IMR-90 (cell line): ENCODE measurements at regions of chr17 and their contacts with region 1.

Region 1: DNA sequence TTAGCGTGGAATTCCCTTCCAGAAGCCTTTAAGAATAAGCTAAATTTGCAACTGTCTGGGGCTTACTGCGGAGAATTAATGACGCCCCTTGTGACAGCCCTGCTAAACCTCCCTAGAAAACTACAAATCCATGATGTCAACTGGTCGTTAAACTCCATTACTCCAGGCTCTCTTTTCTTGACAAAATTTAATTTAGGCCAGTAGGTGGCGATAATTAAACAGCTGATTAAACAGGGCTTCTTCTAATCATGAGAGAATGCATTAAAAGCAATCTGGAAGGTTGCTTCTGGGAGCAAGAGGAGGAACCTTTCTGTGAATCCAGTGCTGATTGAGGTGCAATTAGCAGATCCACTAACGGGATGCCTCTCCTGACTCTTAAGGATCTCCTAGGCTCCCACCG is 8.1 kb upstream of the NLRP1 start:
- DNase-seq: peak; percentile 44
- ATAC-seq: peak; percentile 55; the same call in 1 of the 2 replicates
- H3K4me3 ChIP-seq: no peak overlapping the region
- H3K27ac ChIP-seq: no peak overlapping the region
- H3K4me1 ChIP-seq: no peaks in the 10 kb centered on the region
- H3K27me3 ChIP-seq: peaks cover 17% of the 10 kb centered on the region
- CTCF ChIP-seq: peak; percentile 62
- POLR2A ChIP-seq: no peak
- RAD21 ChIP-seq: peak; percentile 64

Region 2: GRCh38 chr17:5446786-5447185 is 145.6 kb before region 1 on chr17:
- CTCF ChIA-PET with region 1: no interaction called
- POLR2A ChIA-PET with region 1: no interaction called
- dilution Hi-C with region 1: no loop called
- in situ Hi-C with region 1: no loop called
- intact Hi-C with region 1: no loop called
- DNase-seq: no peak
- ATAC-seq: no peak
- H3K4me3 ChIP-seq: no peak overlapping the region
- H3K27ac ChIP-seq: no peak overlapping the region
- H3K4me1 ChIP-seq: no peaks in the 10 kb centered on the region
- H3K27me3 ChIP-seq: no peaks in the 10 kb centered on the region
- CTCF ChIP-seq: no peak
- POLR2A ChIP-seq: no peak
- RAD21 ChIP-seq: no peak

Region 3: GRCh38 chr17:5706577-5707216 is 114.3 kb after region 1 on chr17:
- CTCF ChIA-PET with region 1: interaction called, 3 read pairs
- POLR2A ChIA-PET with region 1: interaction called, 4 read pairs
- dilution Hi-C with region 1: no loop called
- in situ Hi-C with region 1: no loop called
- intact Hi-C with region 1: loop called (anchors 1 kb)
- DNase-seq: peak; percentile 63
- ATAC-seq: peak; percentile 92
- H3K4me3 ChIP-seq: no peak overlapping the region
- H3K27ac ChIP-seq: no peak overlapping the region
- H3K4me1 ChIP-seq: no peaks in the 10 kb centered on the region
- H3K27me3 ChIP-seq: peaks cover 2% of the 10 kb centered on the region
- CTCF ChIP-seq: peak; percentile 68
- POLR2A ChIP-seq: no peak
- RAD21 ChIP-seq: peak; percentile 65

Region 4: DNA sequence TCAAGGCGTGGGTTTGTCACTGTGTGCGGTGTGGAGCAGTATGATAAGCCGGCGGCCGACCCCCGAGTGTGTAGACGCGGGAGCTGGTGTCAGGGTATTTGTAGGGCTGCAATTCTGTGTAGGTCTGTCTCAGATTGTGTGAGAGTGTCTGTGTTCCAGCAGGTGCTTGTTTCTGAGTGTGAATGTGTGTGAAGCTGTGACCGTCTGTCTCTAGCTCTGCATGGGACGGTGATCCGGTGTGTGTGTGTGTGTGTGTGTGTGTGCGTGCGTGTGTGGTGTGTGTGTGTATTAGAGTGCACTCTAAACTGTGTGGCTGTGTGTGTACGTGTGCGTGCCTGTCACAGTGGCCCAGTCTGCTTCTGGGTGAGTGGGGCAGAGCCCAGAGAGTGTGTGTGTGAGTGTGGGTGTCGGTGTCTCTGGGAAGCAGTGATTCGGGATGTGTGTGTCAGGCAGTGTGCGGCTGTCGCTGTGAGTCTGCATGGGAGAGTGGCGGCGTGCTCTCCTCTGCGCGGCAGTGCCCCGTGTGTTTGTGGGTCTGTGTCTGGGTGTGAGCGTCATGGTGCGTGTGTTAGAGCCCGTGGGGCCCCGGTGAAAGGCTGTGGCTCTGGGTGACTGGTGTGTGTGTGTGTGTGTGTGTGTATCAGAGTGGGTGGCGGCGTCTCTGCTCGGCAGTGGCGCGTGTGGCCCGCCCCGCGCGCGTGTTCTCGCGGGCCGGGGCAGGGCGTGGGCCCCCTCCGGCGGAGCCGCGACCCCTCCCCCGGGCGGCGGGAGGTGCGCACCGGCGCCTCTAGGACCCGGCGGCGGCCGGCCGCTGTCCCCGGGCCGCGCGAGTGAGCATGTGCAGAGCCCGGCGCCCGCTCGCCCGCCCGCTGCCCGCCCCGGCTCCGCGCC is 477.4 kb after region 1 on chr17 and contains the start of gene WSCD1:
- CTCF ChIA-PET with region 1: no interaction called
- POLR2A ChIA-PET with region 1: no interaction called
- dilution Hi-C with region 1: no loop called
- in situ Hi-C with region 1: no loop called
- intact Hi-C with region 1: loop called (anchors 5 kb)
- DNase-seq: no peak
- ATAC-seq: peak; percentile 72; the same call in 1 of the 2 replicates
- H3K4me3 ChIP-seq: no peak within 1 kb of the TSS; the same call in 1 of the 2 replicates
- H3K27ac ChIP-seq: no peak within 1 kb of the TSS
- H3K4me1 ChIP-seq: no peaks in the 10 kb centered on the region
- H3K27me3 ChIP-seq: peaks cover 22% of the 10 kb centered on the region
- CTCF ChIP-seq: no peak
- POLR2A ChIP-seq: no peak
- RAD21 ChIP-seq: no peak
- total RNA-seq, gene WSCD1: under 0.01 TPM in 1 of 2 replicates, not detected in the other

Region 5: DNA sequence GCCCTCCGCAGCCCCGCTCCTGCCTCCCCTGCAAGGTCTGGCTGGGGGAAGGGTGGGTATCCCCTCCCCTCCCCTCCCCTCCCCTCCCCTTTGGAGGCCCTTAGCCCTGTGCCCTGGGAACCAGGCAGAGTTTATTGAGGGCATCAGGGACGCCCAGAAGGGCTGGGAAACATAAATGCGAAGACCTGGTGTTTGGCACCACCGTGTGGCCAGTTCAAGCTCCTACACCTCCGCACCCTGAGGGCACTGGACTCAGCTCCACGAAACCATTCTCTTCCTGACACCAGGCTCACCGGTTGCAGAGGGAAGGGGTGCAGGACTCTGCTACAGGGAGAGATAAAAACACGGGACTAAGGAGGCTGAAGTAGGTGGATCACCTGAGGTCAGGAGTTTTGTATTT is 843.6 kb after region 1 on chr17:
- CTCF ChIA-PET with region 1: interaction called, 5 read pairs
- POLR2A ChIA-PET with region 1: no interaction called
- dilution Hi-C with region 1: no loop called
- in situ Hi-C with region 1: no loop called
- intact Hi-C with region 1: loop called (anchors 1 kb)
- DNase-seq: peak; percentile 61
- ATAC-seq: peak; percentile 99
- H3K4me3 ChIP-seq: no peak overlapping the region
- H3K27ac ChIP-seq: no peak overlapping the region
- H3K4me1 ChIP-seq: no peaks in the 10 kb centered on the region
- H3K27me3 ChIP-seq: peaks cover 10% of the 10 kb centered on the region
- CTCF ChIP-seq: peak; percentile 78
- POLR2A ChIP-seq: no peak
- RAD21 ChIP-seq: peak; percentile 81